SK-N-SH (cell line): ENCODE measurements at regions of chr7 and their contacts with region 1.

Region 1: DNA sequence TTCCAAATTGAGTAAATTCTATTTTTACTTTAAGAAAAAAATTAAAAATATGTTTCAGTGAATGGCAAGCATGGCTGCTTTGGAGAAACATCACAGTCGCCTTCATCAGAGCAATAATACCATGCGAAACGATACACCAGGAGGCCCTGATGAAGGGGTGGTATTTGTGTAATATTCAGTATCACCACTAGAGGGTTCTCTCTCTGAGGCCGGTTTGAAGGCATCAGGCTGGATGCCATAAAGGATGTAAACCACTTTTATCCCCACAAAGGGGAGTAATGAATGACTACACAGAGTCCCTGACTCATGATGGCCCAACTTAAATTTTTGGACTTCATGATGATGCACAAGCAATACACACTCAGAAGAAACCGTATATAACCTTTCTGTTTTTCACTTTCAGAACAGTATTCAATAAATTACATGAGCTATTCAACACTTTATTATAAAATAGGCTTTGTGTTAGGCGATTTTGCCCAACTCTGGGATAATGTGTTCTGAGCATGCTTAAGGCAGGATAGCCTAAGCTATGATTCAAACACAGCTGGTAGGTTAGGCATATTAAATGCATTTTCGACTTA is 95.5 kb downstream of the PPP1R17 start:
- DNase-seq: peak; percentile 65
- H3K4me3 ChIP-seq: no peak overlapping the region; a peak in 1 of 4 replicates
- H3K27ac ChIP-seq: no peak overlapping the region
- H3K4me1 ChIP-seq: no peaks in the 10 kb centered on the region
- H3K27me3 ChIP-seq: no peaks in the 10 kb centered on the region
- CTCF ChIP-seq: peak; percentile 90
- EP300 ChIP-seq: no peak
- RAD21 ChIP-seq: peak; percentile 63

Region 2: DNA sequence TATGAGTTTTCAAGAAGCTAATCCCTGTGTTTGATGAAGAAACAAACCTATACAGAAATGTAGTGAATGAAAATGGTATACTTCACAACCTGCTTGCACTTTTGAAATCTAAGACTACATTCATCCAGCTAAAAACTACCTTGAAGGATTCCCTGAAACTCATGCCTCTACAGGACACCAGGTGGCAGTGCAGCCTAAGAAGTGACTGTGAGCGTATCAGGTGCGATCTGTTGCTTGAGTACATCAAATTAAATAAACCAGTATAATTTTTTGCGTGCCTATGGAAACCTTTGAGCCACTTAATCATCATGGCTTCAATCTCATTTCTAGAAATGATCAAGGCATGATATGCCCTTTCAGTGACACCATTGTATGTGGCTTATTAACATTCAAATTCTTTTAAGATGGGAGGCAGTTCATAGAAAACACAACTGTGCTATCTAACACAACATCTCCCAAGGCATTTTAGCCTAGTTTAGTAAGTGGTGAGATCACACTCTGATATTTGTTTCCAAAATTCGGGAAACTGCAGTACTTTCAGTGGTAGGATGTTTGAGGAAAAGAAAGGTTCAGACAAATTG is 38.1 kb before region 1 on chr7:
- CTCF ChIA-PET with region 1: interaction called, 10 read pairs
- POLR2A ChIA-PET with region 1: no interaction called
- DNase-seq: peak; percentile 49
- H3K4me3 ChIP-seq: no peak overlapping the region; a peak in 1 of 4 replicates
- H3K27ac ChIP-seq: no peak overlapping the region
- H3K4me1 ChIP-seq: no peaks in the 10 kb centered on the region
- H3K27me3 ChIP-seq: peaks cover 37% of the 10 kb centered on the region; the same call in 1 of the 2 replicates
- CTCF ChIP-seq: peak; percentile 100
- EP300 ChIP-seq: no peak
- RAD21 ChIP-seq: peak; percentile 96

Region 3: DNA sequence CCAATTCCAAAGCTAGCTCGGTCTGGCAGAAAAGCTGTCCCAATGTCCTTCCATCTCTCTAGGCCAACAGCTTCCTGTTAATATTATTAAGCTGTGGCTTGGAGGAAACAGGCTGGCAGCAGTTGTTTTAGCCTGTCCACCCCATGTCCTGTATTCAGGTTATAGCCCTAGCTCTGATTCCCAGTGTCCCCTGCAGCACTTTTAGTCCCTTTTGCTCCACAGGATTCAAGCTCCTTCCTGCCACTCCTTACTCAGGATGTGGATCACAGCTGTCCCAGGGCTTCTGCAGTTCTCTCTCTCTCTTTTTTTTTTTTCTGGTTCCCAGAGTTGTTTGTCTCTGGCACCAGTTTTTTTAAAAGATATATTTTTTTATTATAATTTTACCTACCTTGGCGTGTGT is 10.3 kb before region 1 on chr7:
- CTCF ChIA-PET with region 1: interaction called, 13 read pairs
- POLR2A ChIA-PET with region 1: no interaction called
- DNase-seq: no peak
- H3K4me3 ChIP-seq: no peak overlapping the region
- H3K27ac ChIP-seq: no peak overlapping the region
- H3K4me1 ChIP-seq: no peaks in the 10 kb centered on the region; a peak in 1 of 4 replicates
- H3K27me3 ChIP-seq: peaks cover 6% of the 10 kb centered on the region; the same call in 1 of the 2 replicates
- CTCF ChIP-seq: no peak
- EP300 ChIP-seq: no peak
- RAD21 ChIP-seq: no peak

Region 4: DNA sequence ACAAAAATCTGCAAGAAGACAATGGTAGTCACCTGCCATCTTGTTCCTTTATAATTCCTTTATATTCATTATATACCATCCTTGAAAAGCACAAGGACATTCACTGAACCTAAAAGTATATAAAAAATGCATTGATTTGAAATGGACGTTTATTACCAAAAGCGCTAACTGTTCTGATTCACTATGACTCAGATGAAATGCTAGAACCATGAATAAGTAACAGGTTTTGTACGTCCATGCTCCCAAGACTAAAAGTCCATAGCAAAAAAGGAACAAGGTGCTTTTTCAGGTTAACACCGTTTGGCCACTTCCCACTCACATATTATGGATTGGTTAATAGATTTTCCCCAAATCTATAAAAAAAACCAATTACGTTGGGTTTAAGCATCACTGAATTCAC is 13.9 kb after region 1 on chr7:
- CTCF ChIA-PET with region 1: interaction called, 12 read pairs
- POLR2A ChIA-PET with region 1: no interaction called
- DNase-seq: no peak
- H3K4me3 ChIP-seq: no peak overlapping the region
- H3K27ac ChIP-seq: no peak overlapping the region
- H3K4me1 ChIP-seq: no peaks in the 10 kb centered on the region; a peak in 1 of 4 replicates
- H3K27me3 ChIP-seq: no peaks in the 10 kb centered on the region
- CTCF ChIP-seq: no peak
- EP300 ChIP-seq: no peak
- RAD21 ChIP-seq: no peak